Natural killer cell (primary cell): ENCODE measurements at regions of chr16 and their contacts with region 1.

Region 1: DNA sequence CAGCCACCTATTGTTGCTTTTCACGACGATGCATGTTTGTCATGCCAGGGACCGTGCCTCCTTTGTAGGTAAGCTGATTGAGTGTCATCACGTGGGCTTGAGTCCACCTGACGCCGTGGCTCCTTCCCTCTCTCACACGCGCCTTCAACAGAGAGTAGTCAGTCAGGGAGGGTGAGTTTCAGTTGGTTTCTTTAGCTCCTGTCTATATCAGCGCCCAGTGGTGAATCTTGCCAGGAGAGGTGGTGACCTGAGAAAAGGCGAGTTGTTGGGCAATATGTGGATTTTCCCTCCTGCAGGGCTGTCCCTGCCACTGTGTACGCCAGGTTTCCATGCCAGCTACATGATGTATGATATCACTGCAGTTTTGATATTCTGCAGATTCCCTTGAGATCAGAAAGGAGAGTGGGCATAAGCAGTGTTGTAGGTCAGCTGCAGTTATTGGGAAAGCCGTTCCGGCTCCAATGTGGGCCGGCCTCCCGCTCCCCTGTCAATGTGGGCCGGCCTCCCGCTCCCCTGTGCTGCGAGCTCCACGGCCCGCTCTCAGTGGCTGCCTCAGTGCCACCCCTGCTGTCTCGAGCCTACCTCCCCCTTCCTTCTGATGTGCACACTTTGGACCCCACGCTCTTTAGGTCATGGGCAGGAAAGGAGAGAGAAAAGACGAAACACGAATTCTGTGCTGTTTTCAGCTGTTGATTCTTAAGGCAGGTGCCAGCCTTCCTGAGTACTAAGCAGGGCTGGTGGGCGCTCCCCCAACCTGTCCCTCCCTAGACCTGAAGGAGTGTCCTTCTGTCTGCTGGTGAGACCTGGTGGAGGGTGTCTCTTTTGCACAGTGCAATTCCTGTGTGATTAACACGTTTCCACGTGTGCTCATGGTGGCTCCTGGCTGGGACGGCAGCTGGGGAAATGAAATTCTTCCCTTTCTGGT is 31.5 kb downstream of the BANP start:
- DNase-seq: no peak
- ATAC-seq: no peak
- H3K4me3 ChIP-seq: no peak overlapping the region
- H3K4me3 Mint-ChIP-seq: peak overlapping the region; percentile 37
- H3K27ac ChIP-seq: no peak overlapping the region
- H3K27ac Mint-ChIP-seq: peak overlapping the region; percentile 86 to 94
- H3K4me1 ChIP-seq: peaks cover 54% of the 10 kb centered on the region
- H3K4me1 Mint-ChIP-seq: peaks cover 46 to 64% of the 10 kb centered on the region in 2 donors
- H3K27me3 ChIP-seq: no peaks in the 10 kb centered on the region
- H3K27me3 Mint-ChIP-seq: peaks cover 0 to 4% of the 10 kb centered on the region in 2 donors
- CTCF ChIP-seq: no peak

Region 2: DNA sequence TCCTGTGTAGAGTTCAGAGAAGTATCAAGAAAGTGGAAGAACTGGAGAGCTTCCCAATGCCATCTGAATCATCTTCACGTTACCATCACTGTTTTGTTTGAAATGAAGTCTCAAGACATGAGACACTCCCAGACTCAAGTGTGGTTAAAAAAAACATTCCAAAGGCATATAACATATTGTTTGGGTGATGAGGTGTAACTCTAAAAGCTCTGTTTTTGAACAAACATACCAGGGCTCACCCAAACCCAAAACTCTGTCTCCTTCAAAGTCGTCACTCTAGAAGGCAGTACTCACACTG is 483.6 kb before region 1 on chr16:
- intact Hi-C with region 1: loop called (anchors 5 kb)
- DNase-seq: no peak
- ATAC-seq: no peak
- H3K4me3 ChIP-seq: no peak overlapping the region
- H3K4me3 Mint-ChIP-seq: no peak overlapping the region
- H3K27ac ChIP-seq: no peak overlapping the region
- H3K27ac Mint-ChIP-seq: no peak overlapping the region
- H3K4me1 ChIP-seq: peaks cover 34% of the 10 kb centered on the region
- H3K4me1 Mint-ChIP-seq: peaks cover 26 to 36% of the 10 kb centered on the region in 2 donors
- H3K27me3 ChIP-seq: no peaks in the 10 kb centered on the region
- H3K27me3 Mint-ChIP-seq: no peaks in the 10 kb centered on the region
- CTCF ChIP-seq: no peak

Region 3: GRCh38 chr16:87950765-87951549 is 31.8 kb before region 1 on chr16 and contains the start of gene BANP:
- intact Hi-C with region 1: loop called (anchors 5 kb)
- DNase-seq: peak; percentile 95 to 99
- ATAC-seq: peak; percentile 86 to 96 (median 87)
- H3K4me3 ChIP-seq: peak within 1 kb of the TSS; percentile 91
- H3K4me3 Mint-ChIP-seq: peak within 1 kb of the TSS; percentile 96
- H3K27ac ChIP-seq: peak within 1 kb of the TSS; percentile 95
- H3K27ac Mint-ChIP-seq: peak within 1 kb of the TSS; percentile 97 to 98
- H3K4me1 ChIP-seq: peaks cover 44% of the 10 kb centered on the region
- H3K4me1 Mint-ChIP-seq: peaks cover 42 to 43% of the 10 kb centered on the region in 2 donors
- H3K27me3 ChIP-seq: no peaks in the 10 kb centered on the region
- H3K27me3 Mint-ChIP-seq: peaks cover 7 to 8% of the 10 kb centered on the region in 2 donors
- CTCF ChIP-seq: no peak
- total RNA-seq, gene BANP: 88.8 to 117 (median 117) TPM